Activated B cell treated with CpG ODN at 0.5 μM for 24 hours (primary cell): ENCODE measurements at regions of chr15 and their contacts with region 1.

Region 1: GRCh38 chr15:78108299-78109084 is 16.1 kb downstream of the SH2D7 start:
- DNase-seq: peak; percentile 72
- ATAC-seq: peak; percentile 95
- H3K4me3 Mint-ChIP-seq: no peak overlapping the region
- H3K27ac Mint-ChIP-seq: no peak overlapping the region
- H3K4me1 Mint-ChIP-seq: peaks cover 5% of the 10 kb centered on the region
- H3K27me3 Mint-ChIP-seq: no peaks in the 10 kb centered on the region
- CTCF ChIP-seq: no peak

Region 2: GRCh38 chr15:77959432-77959879 is 149.0 kb before region 1 on chr15:
- CTCF ChIA-PET with region 1: interaction called, 157 read pairs
- POLR2A ChIA-PET with region 1: no interaction called
- intact Hi-C with region 1: loop called (anchors 1 kb)
- DNase-seq: peak; percentile 69
- ATAC-seq: peak; percentile 99
- H3K4me3 Mint-ChIP-seq: peak overlapping the region; percentile 44
- H3K27ac Mint-ChIP-seq: no peak overlapping the region
- H3K4me1 Mint-ChIP-seq: peaks cover 7% of the 10 kb centered on the region
- H3K27me3 Mint-ChIP-seq: peaks cover 23% of the 10 kb centered on the region
- CTCF ChIP-seq: peak; percentile 93

Region 3: DNA sequence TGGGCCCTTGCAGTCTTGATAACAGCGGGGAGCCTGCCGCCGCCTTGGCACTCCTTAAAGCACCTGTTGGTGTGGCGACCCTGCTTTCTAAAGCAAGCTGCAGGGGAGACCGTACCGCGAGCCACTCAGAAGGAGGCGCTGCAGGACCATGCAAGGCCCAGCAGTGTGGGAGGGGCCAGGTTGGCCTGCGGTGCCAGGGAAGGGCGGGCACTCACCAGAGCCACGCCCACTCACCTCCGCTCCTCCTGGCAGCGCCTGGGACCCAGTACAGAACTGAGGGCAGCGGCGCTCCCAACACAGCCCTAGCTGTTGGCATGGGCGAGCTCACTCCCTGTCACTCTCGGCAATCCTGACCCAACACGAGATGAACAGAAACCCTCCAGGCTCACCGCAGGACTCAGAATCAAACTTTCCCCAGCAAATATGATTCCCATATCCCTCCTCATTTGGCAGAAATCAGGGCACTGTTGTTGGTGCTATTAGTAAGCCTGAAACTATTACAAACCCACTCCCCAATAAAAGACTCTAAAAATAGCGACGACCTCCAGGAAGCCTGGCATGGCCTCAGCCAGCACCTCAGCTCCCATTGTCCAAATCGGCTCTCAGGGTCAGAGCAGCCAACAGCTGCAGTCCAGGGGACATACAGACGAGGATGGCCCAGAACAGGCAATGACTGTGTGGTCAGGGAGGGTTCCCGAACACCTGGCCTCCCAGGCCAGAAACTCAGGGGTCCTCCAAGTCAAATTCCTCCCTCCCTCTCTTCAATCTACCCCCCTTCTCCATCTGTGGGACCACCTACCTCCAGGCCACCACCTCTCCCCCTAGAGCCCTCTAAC is 108.2 kb before region 1 on chr15:
- CTCF ChIA-PET with region 1: interaction called, 39 read pairs
- POLR2A ChIA-PET with region 1: interaction called, 11 read pairs
- intact Hi-C with region 1: loop called (anchors 1 kb)
- DNase-seq: peak; percentile 60
- ATAC-seq: peak; percentile 97
- H3K4me3 Mint-ChIP-seq: no peak overlapping the region
- H3K27ac Mint-ChIP-seq: no peak overlapping the region
- H3K4me1 Mint-ChIP-seq: peaks cover 8% of the 10 kb centered on the region
- H3K27me3 Mint-ChIP-seq: no peaks in the 10 kb centered on the region
- CTCF ChIP-seq: no peak

Region 4: GRCh38 chr15:78120523-78120922 is 12.0 kb after region 1 on chr15:
- CTCF ChIA-PET with region 1: interaction called, 11 read pairs
- POLR2A ChIA-PET with region 1: no interaction called
- intact Hi-C with region 1: no loop called
- DNase-seq: no peak
- ATAC-seq: no peak
- H3K4me3 Mint-ChIP-seq: no peak overlapping the region
- H3K27ac Mint-ChIP-seq: no peak overlapping the region
- H3K4me1 Mint-ChIP-seq: no peaks in the 10 kb centered on the region
- H3K27me3 Mint-ChIP-seq: no peaks in the 10 kb centered on the region
- CTCF ChIP-seq: no peak

Region 5: GRCh38 chr15:78142332-78142731 is 33.8 kb after region 1 on chr15:
- CTCF ChIA-PET with region 1: no interaction called
- POLR2A ChIA-PET with region 1: no interaction called
- intact Hi-C with region 1: no loop called
- DNase-seq: no peak
- ATAC-seq: no peak
- H3K4me3 Mint-ChIP-seq: no peak overlapping the region
- H3K27ac Mint-ChIP-seq: no peak overlapping the region
- H3K4me1 Mint-ChIP-seq: peaks cover 2% of the 10 kb centered on the region
- H3K27me3 Mint-ChIP-seq: no peaks in the 10 kb centered on the region
- CTCF ChIP-seq: no peak

Region 6: DNA sequence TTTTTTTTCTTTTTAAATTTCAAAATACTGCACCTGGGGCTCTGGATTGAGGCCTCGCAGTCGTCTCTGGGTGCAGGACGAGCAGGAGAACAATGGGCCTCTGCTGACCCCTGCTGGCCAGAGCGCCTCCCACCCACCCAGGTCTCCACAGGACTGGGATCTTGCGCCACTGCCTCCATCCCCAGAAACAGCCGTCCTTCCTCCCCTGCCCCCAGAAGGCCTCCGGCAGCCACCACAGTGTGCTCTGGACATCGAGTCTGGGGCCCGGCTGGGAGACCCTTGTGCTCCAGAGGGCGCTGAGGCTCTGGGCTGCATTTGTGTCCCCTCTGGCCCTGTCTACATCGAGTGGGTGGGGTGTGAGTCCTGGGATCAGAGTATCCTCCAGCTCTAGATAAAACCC is 132.5 kb after region 1 on chr15:
- CTCF ChIA-PET with region 1: interaction called, 48 read pairs
- POLR2A ChIA-PET with region 1: no interaction called
- intact Hi-C with region 1: loop called (anchors 1 kb)
- DNase-seq: peak; percentile 77
- ATAC-seq: peak; percentile 94
- H3K4me3 Mint-ChIP-seq: no peak overlapping the region
- H3K27ac Mint-ChIP-seq: no peak overlapping the region
- H3K4me1 Mint-ChIP-seq: peaks cover 2% of the 10 kb centered on the region
- H3K27me3 Mint-ChIP-seq: no peaks in the 10 kb centered on the region
- CTCF ChIP-seq: no peak

Region 7: DNA sequence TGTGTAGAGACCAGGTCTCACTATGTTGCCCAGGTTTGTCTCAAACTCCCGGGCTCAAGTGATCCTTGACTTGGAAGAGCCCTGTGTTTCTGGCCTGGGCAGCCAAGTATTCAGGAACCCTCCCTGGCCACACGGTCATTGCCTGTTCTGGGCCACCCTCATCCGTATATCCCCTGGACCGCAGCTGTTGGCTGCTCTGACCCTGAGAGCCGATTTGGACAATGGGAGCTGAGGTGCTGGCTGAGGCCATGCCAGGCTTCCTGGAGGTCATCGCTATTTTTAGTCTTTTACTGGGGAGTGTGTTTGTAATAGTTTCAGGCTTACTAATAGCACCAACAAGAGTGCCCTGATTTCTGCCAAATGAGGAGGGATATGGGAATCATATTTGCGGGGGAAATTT is 642.1 kb after region 1 on chr15:
- CTCF ChIA-PET with region 1: no interaction called
- POLR2A ChIA-PET with region 1: no interaction called
- intact Hi-C with region 1: loop called (anchors 1 kb)
- DNase-seq: no peak
- ATAC-seq: no peak
- H3K4me3 Mint-ChIP-seq: peak overlapping the region; percentile 44
- H3K27ac Mint-ChIP-seq: peak overlapping the region; percentile 18
- H3K4me1 Mint-ChIP-seq: peaks cover 8% of the 10 kb centered on the region
- H3K27me3 Mint-ChIP-seq: no peaks in the 10 kb centered on the region
- CTCF ChIP-seq: no peak

Region 8: GRCh38 chr15:78840661-78841375 is 732.3 kb after region 1 on chr15:
- CTCF ChIA-PET with region 1: no interaction called
- POLR2A ChIA-PET with region 1: no interaction called
- intact Hi-C with region 1: no loop called
- DNase-seq: no peak
- ATAC-seq: peak; percentile 78
- H3K4me3 Mint-ChIP-seq: no peak overlapping the region
- H3K27ac Mint-ChIP-seq: peak overlapping the region; percentile 59
- H3K4me1 Mint-ChIP-seq: peaks cover 10% of the 10 kb centered on the region
- H3K27me3 Mint-ChIP-seq: peaks cover 2% of the 10 kb centered on the region
- CTCF ChIP-seq: no peak